Activated naive CD8-positive, alpha-beta T cell treated with anti-CD3 and anti-CD28 coated beads, Interleukin-2, amount 10 ng/mL, durations not matched to agents 7 days and 5 days (primary cell): ENCODE measurements at regions of chrX and their contacts with region 1.

Region 1: DNA sequence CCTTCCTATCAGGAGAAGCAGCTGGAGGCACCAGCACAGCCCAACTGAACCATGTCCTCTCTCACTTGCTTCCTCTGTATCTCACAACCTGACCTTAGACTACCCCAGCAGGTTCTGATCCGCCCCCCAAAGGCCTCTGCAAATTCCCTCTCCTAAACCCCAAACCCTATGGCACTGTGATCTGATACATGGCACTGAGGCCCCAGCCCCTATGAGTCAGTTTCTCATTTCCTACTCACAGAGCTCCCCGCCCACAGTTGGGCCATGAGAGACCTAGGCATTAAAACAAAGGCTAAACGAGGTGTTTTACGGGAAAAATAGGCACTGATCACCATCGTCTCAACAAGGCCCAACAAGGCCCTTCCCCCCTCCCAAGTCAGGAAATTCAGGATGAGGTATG is 19.1 kb downstream of the SASH3 start:
- DNase-seq: no peak
- ATAC-seq: peak; percentile 34
- H3K4me3 Mint-ChIP-seq: no peak overlapping the region
- H3K27ac Mint-ChIP-seq: peak overlapping the region; percentile 42
- H3K4me1 Mint-ChIP-seq: peaks cover 8% of the 10 kb centered on the region
- H3K27me3 Mint-ChIP-seq: no peaks in the 10 kb centered on the region

Region 2: GRCh38 chrX:129786210-129786651 is 12.7 kb before region 1 on chrX:
- POLR2A ChIA-PET with region 1: interaction called, 21 read pairs
- DNase-seq: no peak
- ATAC-seq: no peak
- H3K4me3 Mint-ChIP-seq: peak overlapping the region; percentile 81
- H3K27ac Mint-ChIP-seq: peak overlapping the region; percentile 79
- H3K4me1 Mint-ChIP-seq: peaks cover 38% of the 10 kb centered on the region
- H3K27me3 Mint-ChIP-seq: no peaks in the 10 kb centered on the region

Region 3: GRCh38 chrX:129876771-129877305 is 78.0 kb after region 1 on chrX:
- POLR2A ChIA-PET with region 1: no interaction called
- DNase-seq: no peak
- ATAC-seq: no peak
- H3K4me3 Mint-ChIP-seq: no peak overlapping the region
- H3K27ac Mint-ChIP-seq: no peak overlapping the region
- H3K4me1 Mint-ChIP-seq: no peaks in the 10 kb centered on the region
- H3K27me3 Mint-ChIP-seq: peaks cover 2% of the 10 kb centered on the region